ENCODE measurements at regions of chr4 and their contacts with region 1.

Region 1: DNA sequence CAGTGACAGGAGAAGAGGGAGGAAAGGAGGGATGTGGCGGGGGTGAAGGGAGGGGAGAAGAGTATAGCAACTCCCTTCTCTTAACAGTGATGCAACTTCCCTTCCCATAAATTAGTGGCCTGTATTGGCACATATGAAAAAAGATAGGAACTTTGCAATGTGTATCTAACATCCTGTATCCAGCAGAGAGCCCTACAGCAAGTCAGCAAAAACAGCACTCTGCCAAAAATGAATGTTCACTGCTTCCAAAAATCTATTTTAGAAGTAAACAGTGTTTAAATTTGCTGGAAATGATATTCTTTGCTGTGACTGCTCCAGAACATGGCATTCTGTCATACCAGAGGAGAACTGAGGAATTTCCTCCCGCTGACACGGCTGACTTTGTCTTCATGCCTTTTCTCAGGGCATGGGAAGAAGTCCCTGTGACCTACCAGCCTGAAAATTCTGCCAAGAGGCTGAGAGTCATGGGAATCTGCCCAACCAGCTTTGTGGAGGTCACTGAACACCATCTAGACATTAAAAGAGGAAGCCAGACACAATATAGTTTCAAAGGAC is 343.4 kb upstream of the RASGEF1B start:
- DNase-seq: no peak
- ATAC-seq: no peak
- H3K4me3 ChIP-seq: no peak overlapping the region
- H3K4me3 Mint-ChIP-seq: no peak overlapping the region
- H3K27ac ChIP-seq: no peak overlapping the region
- H3K27ac Mint-ChIP-seq: no peak overlapping the region
- H3K4me1 ChIP-seq: no peaks in the 10 kb centered on the region
- H3K4me1 Mint-ChIP-seq: no peaks in the 10 kb centered on the region
- H3K27me3 ChIP-seq: no peaks in the 10 kb centered on the region
- H3K27me3 Mint-ChIP-seq: peaks cover 11% of the 10 kb centered on the region
- CTCF ChIP-seq: no peak

Region 2: DNA sequence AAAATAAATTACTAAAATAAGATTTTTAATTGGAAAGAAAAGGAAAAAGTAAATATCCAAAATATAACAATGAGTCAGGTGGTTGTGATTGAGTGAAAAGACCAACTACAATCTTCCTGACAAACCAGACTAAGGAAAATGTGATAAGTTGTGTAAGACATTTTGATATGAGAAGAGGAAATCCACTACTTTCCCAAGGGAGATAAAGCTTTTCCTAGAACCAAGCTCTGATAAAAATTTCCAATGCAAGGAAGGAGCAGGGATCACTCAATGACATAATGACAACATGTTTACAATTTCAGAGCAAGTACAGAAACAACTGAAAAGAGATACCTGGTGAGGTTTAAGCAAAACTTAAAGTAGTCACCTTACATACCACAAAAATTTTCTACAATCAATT is 38.3 kb before region 1 on chr4:
- CTCF ChIA-PET with region 1: no interaction called
- POLR2A ChIA-PET with region 1: no interaction called
- intact Hi-C with region 1: loop called (anchors 5 kb)
- DNase-seq: no peak
- ATAC-seq: no peak
- H3K4me3 ChIP-seq: no peak overlapping the region
- H3K4me3 Mint-ChIP-seq: no peak overlapping the region
- H3K27ac ChIP-seq: no peak overlapping the region
- H3K27ac Mint-ChIP-seq: no peak overlapping the region
- H3K4me1 ChIP-seq: no peaks in the 10 kb centered on the region
- H3K4me1 Mint-ChIP-seq: peaks cover under 1% of the 10 kb centered on the region
- H3K27me3 ChIP-seq: no peaks in the 10 kb centered on the region
- H3K27me3 Mint-ChIP-seq: no peaks in the 10 kb centered on the region
- CTCF ChIP-seq: no peak

Region 3: DNA sequence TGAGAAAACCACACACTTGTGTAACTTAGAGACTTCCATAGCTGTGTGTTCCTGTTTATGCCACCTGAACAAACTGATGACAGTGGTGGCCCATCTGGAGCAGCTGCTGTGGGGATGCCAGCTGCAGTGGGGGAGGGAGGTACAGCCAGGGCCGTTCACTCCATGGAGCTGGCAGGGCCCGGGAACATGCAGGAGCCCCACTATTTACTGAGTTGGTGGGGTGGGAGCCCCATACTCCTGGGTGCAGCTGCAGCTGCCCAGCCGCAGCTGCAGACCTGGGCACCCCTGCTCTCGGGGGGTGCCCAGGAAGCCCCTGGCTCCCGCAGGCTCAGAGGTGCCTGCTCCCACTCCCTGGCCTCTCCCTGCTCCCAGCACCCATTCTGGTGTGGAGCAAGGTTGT is 55.2 kb after region 1 on chr4:
- CTCF ChIA-PET with region 1: no interaction called
- POLR2A ChIA-PET with region 1: no interaction called
- intact Hi-C with region 1: no loop called
- DNase-seq: no peak
- ATAC-seq: no peak
- H3K4me3 ChIP-seq: no peak overlapping the region
- H3K4me3 Mint-ChIP-seq: no peak overlapping the region
- H3K27ac ChIP-seq: no peak overlapping the region
- H3K27ac Mint-ChIP-seq: no peak overlapping the region
- H3K4me1 ChIP-seq: no peaks in the 10 kb centered on the region
- H3K4me1 Mint-ChIP-seq: no peaks in the 10 kb centered on the region
- H3K27me3 ChIP-seq: peaks cover 0 to 3% (median 0%) of the 10 kb centered on the region in 4 experiments
- H3K27me3 Mint-ChIP-seq: no peaks in the 10 kb centered on the region
- CTCF ChIP-seq: no peak